Activated CD8-positive, alpha-beta T cell treated with anti-CD3 and anti-CD28 coated beads, Interleukin-2, amount 10 ng/mL, durations not matched to agents 7 days and 5 days (primary cell): ENCODE measurements at regions of chr10 and their contacts with region 1.

Region 1: DNA sequence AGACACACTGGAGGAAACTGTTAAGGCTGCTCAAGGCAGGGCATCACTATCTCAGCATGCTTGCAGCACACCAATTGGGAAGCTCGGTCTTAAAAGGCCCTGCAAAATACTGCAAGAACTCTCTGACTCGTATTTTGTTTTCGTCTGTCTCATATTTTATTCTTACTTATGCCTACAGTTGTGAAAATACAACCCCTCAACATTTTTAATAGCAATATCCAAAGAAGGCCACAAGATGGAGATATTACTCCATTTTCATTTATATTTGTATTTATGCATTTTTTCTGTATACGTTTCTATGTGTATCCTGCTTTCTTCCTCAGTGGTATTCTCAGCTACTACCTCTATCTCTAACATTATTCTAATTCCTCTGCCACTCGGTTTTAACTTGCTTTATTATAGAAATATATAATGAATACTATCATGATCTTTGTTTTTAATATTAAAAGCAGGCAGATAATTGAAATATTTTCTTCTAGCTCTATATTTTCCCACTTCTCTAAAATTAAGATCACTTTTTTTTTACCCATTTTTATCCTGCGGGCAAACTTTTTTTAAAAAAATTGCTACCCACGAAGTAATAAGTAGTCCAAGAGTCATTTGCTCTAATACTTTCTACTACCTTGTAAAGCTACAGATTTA is 10.0 kb downstream of the DNAJC1 start:
- DNase-seq: no peak
- ATAC-seq: no peak
- H3K4me3 Mint-ChIP-seq: no peak overlapping the region
- H3K27ac Mint-ChIP-seq: no peak overlapping the region
- H3K4me1 Mint-ChIP-seq: peaks cover 2% of the 10 kb centered on the region
- H3K27me3 Mint-ChIP-seq: no peaks in the 10 kb centered on the region

Region 2: DNA sequence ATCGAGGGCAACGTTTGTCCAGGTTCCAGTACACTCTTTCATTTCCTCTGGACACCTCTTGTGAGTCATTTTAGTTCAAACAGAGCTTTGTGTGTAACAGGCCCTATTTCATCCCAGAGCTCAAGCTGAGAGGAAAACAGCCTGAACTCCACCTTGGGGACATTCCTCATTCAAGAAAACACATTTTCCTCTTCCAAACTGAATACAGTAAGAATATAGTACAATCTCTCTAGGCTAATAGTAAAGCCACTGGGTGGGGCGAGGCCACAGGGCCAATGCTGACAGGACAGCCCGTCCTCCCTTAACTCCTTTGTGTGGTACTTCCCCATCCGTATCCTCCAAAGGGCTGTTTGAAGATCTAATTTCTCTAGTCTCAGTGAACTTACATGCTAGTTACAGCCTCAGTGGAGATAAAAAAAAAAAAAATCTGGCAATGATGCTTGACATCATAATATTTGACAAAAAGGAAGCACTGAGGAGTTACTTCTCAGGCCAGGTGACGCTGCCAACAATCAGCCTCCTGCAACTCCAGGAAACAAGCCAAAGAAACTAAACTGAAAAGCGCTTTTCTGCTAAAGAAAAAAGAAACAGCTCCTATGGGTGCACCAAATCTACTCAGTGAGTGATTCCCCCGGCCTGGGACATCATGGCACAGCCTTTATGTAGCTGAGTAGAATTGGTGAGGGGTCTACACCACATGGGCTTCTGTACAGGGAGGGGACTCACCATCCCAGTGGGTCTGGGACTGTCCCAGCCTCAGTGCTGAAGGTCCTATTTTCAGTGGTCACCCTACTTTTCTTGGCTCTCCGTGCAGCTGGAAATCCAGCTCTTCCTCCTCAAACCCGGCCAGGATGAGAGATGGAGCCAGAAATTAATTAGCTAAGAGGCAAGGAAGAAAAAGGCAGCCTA is 858.2 kb before region 1 on chr10:
- CTCF ChIA-PET with region 1: no interaction called
- POLR2A ChIA-PET with region 1: no interaction called
- DNase-seq: no peak
- ATAC-seq: no peak
- H3K4me3 Mint-ChIP-seq: no peak overlapping the region
- H3K27ac Mint-ChIP-seq: no peak overlapping the region
- H3K4me1 Mint-ChIP-seq: no peaks in the 10 kb centered on the region
- H3K27me3 Mint-ChIP-seq: no peaks in the 10 kb centered on the region

Region 3: DNA sequence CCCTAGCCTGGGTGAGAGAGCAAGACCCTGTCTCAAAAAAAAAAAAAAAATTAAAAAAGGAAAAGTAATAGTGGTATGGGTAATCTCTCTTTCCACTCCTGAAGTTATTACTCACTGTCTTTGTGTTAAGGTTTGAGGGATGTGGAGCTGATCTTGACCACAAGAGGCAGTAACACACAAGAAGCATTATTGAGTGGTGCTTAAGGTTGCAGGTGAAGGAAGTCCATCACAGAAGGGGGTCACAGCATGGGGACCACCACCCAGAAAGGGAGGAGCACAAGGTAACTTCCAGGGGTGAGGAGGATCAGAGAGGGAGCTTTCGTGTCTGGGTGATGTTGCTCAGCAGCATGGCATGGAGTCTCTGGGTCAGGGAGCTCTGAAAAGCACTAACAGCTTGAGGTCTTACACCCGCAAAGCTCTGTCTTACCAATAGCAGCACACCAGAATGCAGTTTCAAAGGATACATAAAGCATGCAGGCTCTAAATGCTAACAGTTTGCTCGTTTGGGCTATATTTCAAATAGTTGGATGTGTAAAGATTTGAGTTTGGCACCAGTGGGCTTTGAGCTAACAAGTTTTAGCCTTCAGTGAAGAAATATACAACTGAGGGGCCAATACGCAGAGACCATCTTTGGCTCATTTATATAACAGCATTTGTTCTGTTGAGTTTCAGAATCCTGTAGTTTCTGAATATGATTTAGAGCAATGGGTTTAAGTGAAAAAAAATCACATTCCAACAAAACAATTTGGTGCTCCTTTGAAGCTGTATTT is 110.4 kb after region 1 on chr10:
- CTCF ChIA-PET with region 1: interaction called, 11 read pairs
- POLR2A ChIA-PET with region 1: no interaction called
- DNase-seq: no peak
- ATAC-seq: no peak
- H3K4me3 Mint-ChIP-seq: no peak overlapping the region
- H3K27ac Mint-ChIP-seq: no peak overlapping the region
- H3K4me1 Mint-ChIP-seq: no peaks in the 10 kb centered on the region
- H3K27me3 Mint-ChIP-seq: peaks cover 2% of the 10 kb centered on the region